WTC11 (cell line): ENCODE measurements at regions of chr20 and their contacts with region 1.

Region 1: DNA sequence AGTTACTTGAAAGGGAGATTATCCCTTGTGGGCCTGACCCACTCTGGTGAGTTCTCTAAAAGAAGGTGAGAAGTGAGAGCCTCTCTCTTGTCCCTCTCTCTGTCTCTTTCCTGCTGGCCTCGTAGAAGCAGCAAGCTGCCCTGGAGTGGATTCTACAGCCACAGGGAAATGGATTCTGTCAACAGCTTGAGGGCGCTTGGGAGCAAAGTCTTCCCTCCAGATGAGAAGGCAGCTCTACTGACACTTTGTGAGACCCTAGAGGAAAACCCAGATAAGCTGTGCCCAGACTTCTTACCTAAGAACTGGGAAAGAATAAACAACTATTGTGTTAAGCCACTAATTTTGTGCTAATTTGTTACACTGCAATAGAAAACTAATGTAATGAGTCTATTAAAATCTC is 39.9 kb downstream of the ANKRD60 start:
- DNase-seq: peak; percentile 46
- ATAC-seq: peak; percentile 80
- H3K4me3 Mint-ChIP-seq: no peak overlapping the region
- H3K27ac Mint-ChIP-seq: no peak overlapping the region
- H3K4me1 Mint-ChIP-seq: no peaks in the 10 kb centered on the region
- H3K27me3 Mint-ChIP-seq: peaks cover 11% of the 10 kb centered on the region
- CTCF ChIP-seq: no peak

Region 2: DNA sequence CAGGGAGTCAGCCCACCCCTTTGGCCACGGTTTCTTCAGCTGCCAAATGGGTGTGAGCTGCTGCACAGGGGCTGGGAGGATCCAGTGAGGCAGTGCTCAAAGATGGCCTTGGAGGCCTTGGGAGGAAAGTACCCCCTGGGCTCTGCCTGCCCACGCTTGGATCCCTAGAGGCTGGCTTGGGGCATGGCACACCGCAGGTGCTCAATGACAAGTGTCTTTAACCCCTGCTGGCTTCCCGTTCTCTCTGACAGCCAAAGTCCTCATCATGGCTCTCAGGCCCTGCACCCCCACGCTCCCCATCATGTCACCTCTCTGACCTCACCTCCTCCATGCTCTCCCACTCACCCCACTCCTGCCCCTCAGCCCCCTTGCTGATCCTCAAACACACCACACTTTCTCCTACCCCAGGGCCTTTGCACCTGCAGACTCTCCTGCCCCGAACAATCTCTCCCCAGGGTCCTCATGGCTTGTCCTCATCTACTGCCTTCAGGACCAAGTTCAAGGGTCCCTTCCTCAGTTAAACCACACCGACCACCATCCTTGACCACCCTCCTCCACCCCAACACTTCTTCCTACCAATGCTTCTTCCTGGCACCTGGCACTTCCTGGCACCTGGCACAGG is 150.2 kb before region 1 on chr20:
- CTCF ChIA-PET with region 1: no interaction called
- POLR2A ChIA-PET with region 1: no interaction called
- DNase-seq: no peak
- ATAC-seq: no peak
- H3K4me3 Mint-ChIP-seq: no peak overlapping the region
- H3K27ac Mint-ChIP-seq: no peak overlapping the region
- H3K4me1 Mint-ChIP-seq: peaks cover 8% of the 10 kb centered on the region
- H3K27me3 Mint-ChIP-seq: peaks cover 2% of the 10 kb centered on the region; the same call in 1 of the 2 replicates
- CTCF ChIP-seq: no peak

Region 3: GRCh38 chr20:58209652-58210397 is 21.3 kb after region 1 on chr20:
- CTCF ChIA-PET with region 1: interaction called, 14 read pairs
- POLR2A ChIA-PET with region 1: no interaction called
- DNase-seq: peak; percentile 91
- ATAC-seq: peak; percentile 70
- H3K4me3 Mint-ChIP-seq: peak overlapping the region; percentile 49
- H3K27ac Mint-ChIP-seq: no peak overlapping the region
- H3K4me1 Mint-ChIP-seq: peaks cover 4% of the 10 kb centered on the region
- H3K27me3 Mint-ChIP-seq: peaks cover 2% of the 10 kb centered on the region; the same call in 1 of the 2 replicates
- CTCF ChIP-seq: peak; percentile 100